Upper lobe of right lung (tissue), 1 donor: ENCODE measurements at regions of chr22 and their contacts with region 1.

Region 1: GRCh38 chr22:37887610-37888378 is 18.3 kb upstream of the MICALL1 start:
- DNase-seq: no peak
- ATAC-seq: peak; percentile 79
- H3K4me3 ChIP-seq: no peak overlapping the region
- H3K27ac ChIP-seq: no peak overlapping the region
- H3K4me1 ChIP-seq: peaks cover 15% of the 10 kb centered on the region
- H3K27me3 ChIP-seq: no peaks in the 10 kb centered on the region
- CTCF ChIP-seq: peak; percentile 46

Region 2: DNA sequence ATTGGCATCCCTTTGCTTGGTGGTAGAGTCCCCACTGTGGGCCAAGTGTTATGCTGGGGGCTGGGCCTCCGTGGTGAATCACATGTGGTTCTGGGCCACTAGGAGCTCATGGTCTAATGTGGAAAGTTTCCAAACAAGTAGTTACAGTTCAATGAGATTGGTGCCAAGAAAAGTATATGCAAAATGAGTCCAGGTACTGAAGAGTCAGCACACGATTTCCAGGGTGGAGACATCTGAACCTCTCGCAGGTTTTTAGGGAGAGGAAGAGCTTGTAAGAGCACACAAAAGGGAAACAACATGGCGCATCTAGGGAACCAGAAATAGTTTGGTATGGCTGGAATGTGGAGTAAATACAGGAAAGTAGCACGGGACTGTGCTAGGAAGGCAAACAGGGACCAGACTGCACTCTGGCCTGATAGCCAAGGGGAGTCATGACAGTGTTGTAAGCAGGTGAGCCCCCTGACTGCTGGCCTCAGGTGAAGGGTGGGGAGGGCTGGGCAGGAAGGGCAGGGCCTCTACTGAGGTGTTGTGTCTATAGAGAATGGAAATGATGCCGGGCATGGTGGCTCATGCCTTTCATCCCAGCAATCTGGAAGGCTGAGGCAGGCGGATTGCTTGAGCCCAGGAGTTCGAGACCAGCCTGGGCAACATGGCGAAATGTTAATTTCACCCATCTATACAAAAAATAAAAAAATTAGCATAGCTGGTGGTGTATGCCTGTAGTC is 78.3 kb after region 1 on chr22:
- intact Hi-C with region 1: loop called (anchors 10 kb)
- DNase-seq: no peak
- ATAC-seq: peak; percentile 27
- H3K4me3 ChIP-seq: no peak overlapping the region
- H3K27ac ChIP-seq: no peak overlapping the region
- H3K4me1 ChIP-seq: no peaks in the 10 kb centered on the region
- H3K27me3 ChIP-seq: no peaks in the 10 kb centered on the region
- CTCF ChIP-seq: no peak